Activated CD8-positive, alpha-beta T cell treated with anti-CD3 and anti-CD28 coated beads, Interleukin-2, amount 10 ng/mL, durations not matched to agents 7 days and 5 days (primary cell): ENCODE measurements at regions of chr12 and their contacts with region 1.

Region 1: DNA sequence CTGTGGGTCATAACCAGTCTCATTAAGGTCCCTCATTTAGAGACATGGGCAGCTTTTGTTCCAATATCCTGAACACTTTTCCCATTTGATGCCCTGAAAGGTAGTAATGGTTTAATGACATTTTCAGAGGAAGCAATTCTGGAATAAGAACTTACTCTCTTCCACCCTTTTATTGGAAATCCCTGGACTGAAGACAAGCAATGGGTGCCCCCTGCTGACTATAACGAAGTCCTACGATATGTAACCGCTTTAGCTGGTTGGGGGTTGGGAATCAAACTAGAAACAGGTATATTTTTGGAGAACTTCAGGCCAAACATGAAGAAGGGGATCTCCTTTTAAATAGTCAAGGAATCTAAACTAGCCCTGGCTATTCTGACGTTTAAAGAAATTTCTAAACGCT is 20.5 kb downstream of the SARNP start:
- DNase-seq: no peak
- ATAC-seq: no peak
- H3K4me3 Mint-ChIP-seq: no peak overlapping the region
- H3K27ac Mint-ChIP-seq: no peak overlapping the region
- H3K4me1 Mint-ChIP-seq: peaks cover 12% of the 10 kb centered on the region
- H3K27me3 Mint-ChIP-seq: no peaks in the 10 kb centered on the region

Region 2: GRCh38 chr12:55728939-55729823 is 67.9 kb before region 1 on chr12 and contains the start of gene CD63:
- CTCF ChIA-PET with region 1: interaction called, 12 read pairs
- POLR2A ChIA-PET with region 1: no interaction called
- DNase-seq: peak; percentile 75
- ATAC-seq: peak; percentile 64
- H3K4me3 Mint-ChIP-seq: peak within 1 kb of the TSS; percentile 84
- H3K27ac Mint-ChIP-seq: peak within 1 kb of the TSS; percentile 93
- H3K4me1 Mint-ChIP-seq: peaks cover 59% of the 10 kb centered on the region
- H3K27me3 Mint-ChIP-seq: no peaks in the 10 kb centered on the region
- total RNA-seq, gene CD63: 203 to 206 TPM

Region 3: DNA sequence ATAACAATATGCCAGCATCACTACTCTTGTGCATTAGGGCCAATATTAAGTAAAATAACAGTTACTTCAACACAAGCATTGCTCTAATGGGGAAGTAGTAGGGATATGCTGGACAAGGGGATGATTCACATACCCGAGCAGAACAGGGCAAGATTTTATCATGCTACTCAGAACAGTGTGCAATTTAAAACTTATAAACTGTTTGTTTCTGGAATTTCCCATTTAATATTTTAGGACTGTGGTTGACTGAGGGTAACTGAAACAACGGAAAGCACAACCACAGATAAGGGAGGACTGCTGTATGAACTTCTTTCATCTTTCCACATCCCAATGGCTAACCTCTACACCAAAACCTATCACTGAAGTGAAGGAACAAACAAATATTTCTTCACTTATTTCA is 16.4 kb before region 1 on chr12:
- CTCF ChIA-PET with region 1: interaction called, 15 read pairs
- POLR2A ChIA-PET with region 1: no interaction called
- DNase-seq: no peak
- ATAC-seq: no peak
- H3K4me3 Mint-ChIP-seq: no peak overlapping the region
- H3K27ac Mint-ChIP-seq: peak overlapping the region; percentile 39
- H3K4me1 Mint-ChIP-seq: peaks cover 10% of the 10 kb centered on the region
- H3K27me3 Mint-ChIP-seq: no peaks in the 10 kb centered on the region

Region 4: DNA sequence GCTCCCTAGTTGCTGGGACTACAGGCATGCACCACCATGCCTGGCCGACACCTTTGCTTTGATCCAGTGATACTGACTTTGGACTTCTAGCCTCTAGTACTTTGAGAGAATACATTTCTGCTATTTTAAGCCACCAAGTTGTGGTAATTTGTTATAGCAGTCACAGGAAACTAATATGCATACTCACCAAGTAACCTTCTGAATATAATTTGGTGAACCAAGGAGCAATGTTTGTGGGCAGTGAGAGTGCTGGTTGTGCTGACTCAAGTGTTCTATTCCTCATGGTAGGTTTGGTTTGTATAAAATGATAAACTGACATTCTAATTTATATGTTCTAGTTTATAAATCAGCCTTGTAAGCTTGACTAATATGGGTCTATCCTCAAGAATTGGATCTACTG is 88.0 kb after region 1 on chr12:
- CTCF ChIA-PET with region 1: no interaction called
- POLR2A ChIA-PET with region 1: no interaction called
- DNase-seq: no peak
- ATAC-seq: peak; percentile 36
- H3K4me3 Mint-ChIP-seq: no peak overlapping the region
- H3K27ac Mint-ChIP-seq: no peak overlapping the region
- H3K4me1 Mint-ChIP-seq: peaks cover 17% of the 10 kb centered on the region
- H3K27me3 Mint-ChIP-seq: no peaks in the 10 kb centered on the region